ENCODE measurements at regions of chr6 and their contacts with region 1.

Region 1: GRCh38 chr6:145051661-145052060 is 683.7 kb downstream of the EPM2A start:
- DNase-seq: no peak
- ATAC-seq: no peak

Region 2: GRCh38 chr6:144999127-144999526 is 52.5 kb before region 1 on chr6:
- intact Hi-C with region 1: no loop called
- DNase-seq: no peak
- ATAC-seq: no peak

Region 3: GRCh38 chr6:145028144-145028818 is 23.4 kb before region 1 on chr6:
- intact Hi-C with region 1: no loop called
- DNase-seq: no peak
- ATAC-seq: no peak

Region 4: GRCh38 chr6:145081677-145082076 is 30.0 kb after region 1 on chr6:
- intact Hi-C with region 1: loop called (anchors 2 kb)
- DNase-seq: no peak
- ATAC-seq: no peak

Region 5: DNA sequence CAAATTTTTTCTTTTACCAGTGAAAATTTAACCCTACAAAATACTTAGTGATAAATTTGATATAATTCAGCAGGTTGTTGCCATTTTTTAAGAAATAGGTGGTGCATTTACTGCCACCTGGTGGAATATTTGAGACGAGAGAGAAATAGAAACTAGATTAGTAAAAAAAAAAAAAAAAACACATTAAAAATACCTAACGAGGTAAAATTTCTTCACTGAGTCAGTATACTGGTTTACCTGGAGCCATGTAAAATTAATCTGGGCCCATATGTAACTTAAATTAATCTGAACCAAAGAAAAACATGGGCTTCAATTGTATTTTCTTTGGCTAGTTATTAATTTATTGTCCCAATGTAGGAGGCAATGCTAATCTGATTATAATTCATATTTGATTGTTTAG is 162.9 kb after region 1 on chr6:
- intact Hi-C with region 1: no loop called
- DNase-seq: no peak
- ATAC-seq: no peak

Measured in sciatic nerve (tissue), 2 donors.